Naive thymus-derived CD4-positive, alpha-beta T cell (primary cell): ENCODE measurements at regions of chr7 and their contacts with region 1.

Region 1: GRCh38 chr7:157502701-157503111 is 165.9 kb downstream of the DNAJB6 start:
- DNase-seq: peak; percentile 33 to 94 (median 92)
- ATAC-seq: peak; percentile 98
- H3K4me3 ChIP-seq: peak overlapping the region; percentile 26
- H3K4me3 Mint-ChIP-seq: peak overlapping the region; percentile 77 to 93 (median 87)
- H3K27ac ChIP-seq: peak overlapping the region; percentile 68
- H3K27ac Mint-ChIP-seq: peak overlapping the region; percentile 86 to 100 (median 96)
- H3K4me1 ChIP-seq: peaks cover 20 to 22% of the 10 kb centered on the region in 2 donors
- H3K4me1 Mint-ChIP-seq: peaks cover 20 to 37% (median 34%) of the 10 kb centered on the region in 7 donors
- H3K27me3 ChIP-seq: no peaks in the 10 kb centered on the region
- H3K27me3 Mint-ChIP-seq: peaks cover 0 to 22% (median 7%) of the 10 kb centered on the region in 5 donors

Region 2: DNA sequence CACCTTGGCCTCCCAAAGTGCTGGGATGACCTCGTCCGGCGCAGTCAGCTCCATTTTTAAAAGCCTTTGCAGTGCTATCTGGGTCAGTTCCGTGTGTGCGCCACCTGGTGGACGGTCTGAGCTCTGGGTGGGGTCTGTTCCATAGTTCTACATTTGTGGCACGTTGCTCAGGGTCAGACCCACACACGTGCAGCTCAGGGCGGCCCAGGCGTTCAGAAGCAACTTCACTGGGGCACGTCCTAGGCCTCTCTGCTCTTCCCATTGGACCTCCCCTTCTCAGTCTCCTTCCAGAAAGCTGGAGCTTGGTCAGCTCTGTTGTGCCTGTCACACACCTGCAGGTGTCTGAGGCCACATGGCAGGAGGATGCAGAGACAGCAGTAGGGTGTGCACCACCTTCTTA is 28.0 kb before region 1 on chr7:
- CTCF ChIA-PET with region 1: interaction called, 4 read pairs
- POLR2A ChIA-PET with region 1: interaction called, 6 read pairs
- intact Hi-C with region 1: loop called (anchors 1 kb)
- DNase-seq: no peak
- ATAC-seq: no peak
- H3K4me3 ChIP-seq: no peak overlapping the region
- H3K4me3 Mint-ChIP-seq: peak overlapping the region in 5 of 10 donors; percentile 17 to 44 (median 36)
- H3K27ac ChIP-seq: no peak overlapping the region
- H3K27ac Mint-ChIP-seq: peak overlapping the region in 8 of 9 donors; percentile 3 to 97 (median 76)
- H3K4me1 ChIP-seq: peaks cover 21 to 44% of the 10 kb centered on the region in 2 donors
- H3K4me1 Mint-ChIP-seq: peaks cover 41 to 85% (median 63%) of the 10 kb centered on the region in 7 donors
- H3K27me3 ChIP-seq: no peaks in the 10 kb centered on the region
- H3K27me3 Mint-ChIP-seq: no peaks in the 10 kb centered on the region

Region 3: GRCh38 chr7:157490457-157490912 is 12.2 kb before region 1 on chr7:
- CTCF ChIA-PET with region 1: no interaction called
- POLR2A ChIA-PET with region 1: interaction called, 5 read pairs
- intact Hi-C with region 1: loop called (anchors 1 kb)
- DNase-seq: peak in 8 of 9 donors; percentile 48 to 83 (median 79)
- ATAC-seq: peak; percentile 96
- H3K4me3 ChIP-seq: no peak overlapping the region
- H3K4me3 Mint-ChIP-seq: peak overlapping the region; percentile 23 to 76 (median 51)
- H3K27ac ChIP-seq: no peak overlapping the region
- H3K27ac Mint-ChIP-seq: peak overlapping the region; percentile 12 to 90 (median 63)
- H3K4me1 ChIP-seq: peaks cover 18 to 21% of the 10 kb centered on the region in 2 donors
- H3K4me1 Mint-ChIP-seq: peaks cover 20 to 55% (median 41%) of the 10 kb centered on the region in 7 donors
- H3K27me3 ChIP-seq: no peaks in the 10 kb centered on the region
- H3K27me3 Mint-ChIP-seq: peaks cover 0 to 33% (median 10%) of the 10 kb centered on the region in 5 donors

Region 4: DNA sequence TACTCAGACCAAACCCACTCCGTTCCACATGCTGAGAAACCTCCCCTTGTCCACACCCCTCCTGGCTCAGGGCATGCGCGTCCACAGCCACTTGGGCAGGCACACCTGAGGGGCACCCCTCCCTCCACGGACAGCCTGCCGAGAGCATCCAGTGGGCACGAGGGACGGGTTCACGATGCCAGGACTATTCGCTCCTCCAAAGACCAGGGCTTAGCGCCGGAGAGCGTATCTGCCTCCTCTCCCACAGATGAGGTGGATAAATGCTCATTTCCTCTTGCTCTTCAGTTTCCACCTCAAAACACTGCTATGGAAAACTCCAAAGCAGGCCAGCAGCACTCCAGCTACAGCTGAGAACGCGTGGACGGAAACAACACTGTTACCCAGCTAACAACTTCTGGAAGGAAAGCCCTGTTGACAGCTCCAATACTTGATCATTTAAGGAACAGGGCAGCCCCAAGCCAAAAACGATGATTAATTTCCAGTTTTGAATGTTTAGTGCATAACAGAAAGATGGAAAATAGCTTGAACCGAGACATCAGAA is 38.7 kb after region 1 on chr7:
- CTCF ChIA-PET with region 1: no interaction called
- POLR2A ChIA-PET with region 1: no interaction called
- intact Hi-C with region 1: no loop called
- DNase-seq: no peak
- ATAC-seq: no peak
- H3K4me3 ChIP-seq: no peak overlapping the region
- H3K4me3 Mint-ChIP-seq: no peak overlapping the region
- H3K27ac ChIP-seq: no peak overlapping the region
- H3K27ac Mint-ChIP-seq: no peak overlapping the region
- H3K4me1 ChIP-seq: no peaks in the 10 kb centered on the region
- H3K4me1 Mint-ChIP-seq: peaks cover 0 to 16% (median 5%) of the 10 kb centered on the region in 7 donors
- H3K27me3 ChIP-seq: no peaks in the 10 kb centered on the region
- H3K27me3 Mint-ChIP-seq: peaks cover 0 to 3% (median 0%) of the 10 kb centered on the region in 5 donors

Region 5: GRCh38 chr7:157568770-157569584 is 66.3 kb after region 1 on chr7:
- CTCF ChIA-PET with region 1: no interaction called
- POLR2A ChIA-PET with region 1: no interaction called
- intact Hi-C with region 1: loop called in 1 of 2 experiments (anchors 2 kb)
- DNase-seq: peak; percentile 36 to 73 (median 64)
- ATAC-seq: peak; percentile 84
- H3K4me3 ChIP-seq: peak overlapping the region; percentile 54
- H3K4me3 Mint-ChIP-seq: peak overlapping the region; percentile 87 to 98 (median 92)
- H3K27ac ChIP-seq: no peak overlapping the region
- H3K27ac Mint-ChIP-seq: peak overlapping the region; percentile 63 to 95 (median 82)
- H3K4me1 ChIP-seq: peaks cover 11 to 15% of the 10 kb centered on the region in 2 donors
- H3K4me1 Mint-ChIP-seq: peaks cover 12 to 33% (median 24%) of the 10 kb centered on the region in 7 donors
- H3K27me3 ChIP-seq: no peaks in the 10 kb centered on the region
- H3K27me3 Mint-ChIP-seq: peaks cover 0 to 6% (median 0%) of the 10 kb centered on the region in 5 donors

Region 6: DNA sequence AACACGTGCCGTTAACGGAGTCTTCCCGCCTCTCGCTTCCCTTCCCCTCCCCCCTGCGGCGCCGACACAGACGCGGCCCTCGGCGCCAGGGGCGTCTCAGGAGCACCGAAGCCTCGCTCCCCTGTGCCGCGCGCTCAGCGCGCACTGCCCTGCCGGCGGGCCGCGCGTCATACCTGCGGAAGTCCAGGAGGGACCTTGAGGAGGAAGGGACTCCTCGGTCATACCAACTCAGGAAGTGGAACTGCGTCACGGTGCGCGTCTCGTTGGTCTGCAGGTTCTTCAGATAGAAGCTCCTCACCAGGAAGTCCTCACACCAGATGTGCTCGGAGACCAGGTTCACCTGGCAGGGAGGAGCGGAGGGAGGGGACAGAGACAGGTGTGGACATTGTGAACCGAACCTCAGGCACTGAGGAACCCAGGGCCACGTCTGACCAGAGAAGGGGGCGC is 73.8 kb after region 1 on chr7:
- CTCF ChIA-PET with region 1: interaction called, 4 read pairs
- POLR2A ChIA-PET with region 1: interaction called, 3 read pairs
- intact Hi-C with region 1: loop called in 1 of 2 experiments (anchors 5 kb)
- DNase-seq: peak; percentile 29 to 76 (median 71)
- ATAC-seq: peak; percentile 87
- H3K4me3 ChIP-seq: peak overlapping the region; percentile 52
- H3K4me3 Mint-ChIP-seq: peak overlapping the region; percentile 73 to 88 (median 80)
- H3K27ac ChIP-seq: peak overlapping the region; percentile 69
- H3K27ac Mint-ChIP-seq: peak overlapping the region; percentile 86 to 98 (median 93)
- H3K4me1 ChIP-seq: peaks cover 5 to 12% of the 10 kb centered on the region in 2 donors
- H3K4me1 Mint-ChIP-seq: peaks cover 0 to 27% (median 19%) of the 10 kb centered on the region in 7 donors
- H3K27me3 ChIP-seq: no peaks in the 10 kb centered on the region
- H3K27me3 Mint-ChIP-seq: peaks cover 0 to 7% (median 0%) of the 10 kb centered on the region in 5 donors

Region 7: DNA sequence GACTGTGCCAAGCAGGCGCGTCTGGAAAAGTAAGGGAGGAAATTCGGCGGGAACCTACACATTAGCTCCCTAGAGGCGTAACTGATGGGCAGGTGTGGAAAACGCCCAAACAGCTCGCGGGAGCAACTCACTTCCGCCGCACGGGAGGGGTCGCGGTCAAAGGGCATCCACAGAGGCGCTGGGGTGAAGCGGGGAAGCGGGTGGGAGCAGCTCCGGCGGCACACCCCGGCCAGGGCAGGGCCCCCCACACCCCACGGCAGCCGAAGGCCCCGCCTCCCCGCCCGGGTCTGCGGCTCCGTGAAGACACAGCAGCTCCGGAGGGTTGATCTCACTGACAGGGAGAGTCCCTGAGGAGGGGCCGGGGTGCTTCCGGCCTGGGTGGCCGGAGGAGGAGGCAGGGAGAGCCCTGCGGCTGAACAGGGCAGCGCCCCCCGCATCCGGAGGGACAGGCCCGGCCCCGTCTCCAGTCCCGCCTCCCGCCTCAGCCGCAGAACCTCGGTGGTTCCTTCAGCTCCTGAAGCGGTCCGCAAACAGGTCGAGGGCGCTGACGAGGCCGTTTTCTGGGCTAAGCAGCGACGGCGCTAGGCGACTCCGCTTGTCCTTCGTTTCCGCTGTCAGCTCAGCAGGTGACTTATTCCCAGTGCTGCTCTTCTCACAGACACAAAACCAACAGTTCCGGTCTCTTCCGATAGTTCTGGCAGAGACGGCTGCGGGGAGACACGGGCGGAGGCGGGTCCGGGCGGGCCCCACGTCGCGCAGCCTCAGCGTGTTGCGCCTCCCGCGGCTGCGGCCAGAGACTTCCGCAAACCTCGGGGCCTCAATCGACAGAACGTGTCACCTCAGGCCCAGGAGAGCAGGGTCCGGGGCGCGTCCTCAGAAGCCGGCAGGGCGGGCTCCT is 110.2 kb after region 1 on chr7:
- CTCF ChIA-PET with region 1: no interaction called
- POLR2A ChIA-PET with region 1: interaction called, 3 read pairs
- intact Hi-C with region 1: loop called (anchors 2 kb)
- DNase-seq: peak; percentile 50 to 86 (median 79)
- ATAC-seq: peak; percentile 88
- H3K4me3 ChIP-seq: peak overlapping the region; percentile 79
- H3K4me3 Mint-ChIP-seq: peak overlapping the region; percentile 76 to 93 (median 86)
- H3K27ac ChIP-seq: peak overlapping the region; percentile 63
- H3K27ac Mint-ChIP-seq: peak overlapping the region; percentile 80 to 97 (median 88)
- H3K4me1 ChIP-seq: peaks cover 0 to 8% of the 10 kb centered on the region in 2 donors
- H3K4me1 Mint-ChIP-seq: peaks cover 8 to 37% (median 23%) of the 10 kb centered on the region in 7 donors
- H3K27me3 ChIP-seq: no peaks in the 10 kb centered on the region
- H3K27me3 Mint-ChIP-seq: peaks cover 0 to 4% (median 0%) of the 10 kb centered on the region in 5 donors

Region 8: DNA sequence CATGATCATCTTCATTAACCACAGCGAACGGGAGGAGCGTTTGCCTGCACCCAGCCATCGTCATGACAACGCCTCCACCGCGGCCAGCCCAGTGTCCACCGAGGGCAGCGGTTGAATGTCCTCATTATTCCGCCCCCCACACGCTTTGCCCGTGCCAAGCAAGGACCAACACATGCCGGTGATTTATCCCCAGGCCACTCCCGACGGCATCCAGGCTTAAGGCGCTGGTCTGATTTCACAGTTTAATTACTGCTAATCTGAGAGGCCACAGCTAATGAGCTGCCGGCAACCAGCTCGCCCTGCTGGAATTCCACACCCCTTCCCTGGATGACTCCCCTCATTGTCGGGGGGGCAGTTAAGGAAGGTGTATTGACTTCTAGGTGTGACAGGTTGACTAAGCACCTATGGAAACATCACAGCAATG is 266.4 kb after region 1 on chr7:
- CTCF ChIA-PET with region 1: no interaction called
- POLR2A ChIA-PET with region 1: no interaction called
- intact Hi-C with region 1: no loop called
- DNase-seq: no peak
- ATAC-seq: no peak
- H3K4me3 ChIP-seq: no peak overlapping the region
- H3K4me3 Mint-ChIP-seq: no peak overlapping the region
- H3K27ac ChIP-seq: no peak overlapping the region
- H3K27ac Mint-ChIP-seq: no peak overlapping the region
- H3K4me1 ChIP-seq: no peaks in the 10 kb centered on the region
- H3K4me1 Mint-ChIP-seq: peaks cover 0 to 10% (median 0%) of the 10 kb centered on the region in 7 donors
- H3K27me3 ChIP-seq: no peaks in the 10 kb centered on the region
- H3K27me3 Mint-ChIP-seq: peaks cover 0 to 17% (median 7%) of the 10 kb centered on the region in 5 donors

Region 9: DNA sequence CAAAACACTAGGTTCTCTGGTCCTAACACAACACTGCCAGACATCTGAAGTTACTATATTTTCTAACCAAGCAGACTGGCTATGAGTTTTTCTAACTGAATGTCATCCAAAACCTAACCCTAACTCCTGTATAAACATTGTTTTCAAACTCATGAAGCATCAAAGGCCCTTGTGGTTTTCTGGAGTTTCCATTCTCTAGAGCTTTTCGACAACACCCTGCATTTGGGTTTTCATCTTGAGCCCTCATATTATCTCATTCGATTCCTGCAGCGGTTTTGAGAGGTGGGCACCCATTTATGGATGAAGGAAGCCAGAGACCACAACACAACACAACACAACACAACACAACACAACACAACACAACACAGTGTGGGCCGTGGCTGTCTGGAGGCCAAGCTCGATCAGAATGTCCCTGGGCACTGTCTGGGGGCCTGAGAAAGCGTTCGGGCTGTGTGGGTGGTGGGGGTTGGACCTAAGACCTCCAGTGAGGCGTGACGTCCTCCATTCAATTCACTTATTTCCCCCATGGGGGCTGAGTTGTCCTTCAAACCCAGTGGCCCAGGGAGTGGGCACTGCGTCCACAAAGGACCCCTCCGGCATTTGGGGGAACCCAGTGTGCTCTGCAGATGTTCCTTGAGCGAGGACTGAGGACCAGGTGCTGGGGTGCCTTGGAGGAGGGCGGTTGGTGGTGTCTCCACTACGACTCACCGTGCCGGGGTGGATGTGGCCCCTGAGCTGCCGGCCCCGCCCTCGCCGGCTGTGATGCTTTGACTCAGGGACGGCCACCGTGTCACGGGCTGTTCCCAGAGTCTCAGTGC is 324.5 kb after region 1 on chr7:
- CTCF ChIA-PET with region 1: no interaction called
- POLR2A ChIA-PET with region 1: no interaction called
- intact Hi-C with region 1: loop called in 1 of 2 experiments (anchors 5 kb)
- DNase-seq: peak in 7 of 9 donors; percentile 53 to 79 (median 67)
- ATAC-seq: peak; percentile 74
- H3K4me3 ChIP-seq: peak overlapping the region; percentile 37
- H3K4me3 Mint-ChIP-seq: peak overlapping the region; percentile 45 to 83 (median 78)
- H3K27ac ChIP-seq: peak overlapping the region; percentile 40
- H3K27ac Mint-ChIP-seq: peak overlapping the region; percentile 66 to 96 (median 89)
- H3K4me1 ChIP-seq: peaks cover 0 to 47% of the 10 kb centered on the region in 2 donors
- H3K4me1 Mint-ChIP-seq: peaks cover 9 to 58% (median 45%) of the 10 kb centered on the region in 7 donors
- H3K27me3 ChIP-seq: no peaks in the 10 kb centered on the region
- H3K27me3 Mint-ChIP-seq: no peaks in the 10 kb centered on the region

Region 10: DNA sequence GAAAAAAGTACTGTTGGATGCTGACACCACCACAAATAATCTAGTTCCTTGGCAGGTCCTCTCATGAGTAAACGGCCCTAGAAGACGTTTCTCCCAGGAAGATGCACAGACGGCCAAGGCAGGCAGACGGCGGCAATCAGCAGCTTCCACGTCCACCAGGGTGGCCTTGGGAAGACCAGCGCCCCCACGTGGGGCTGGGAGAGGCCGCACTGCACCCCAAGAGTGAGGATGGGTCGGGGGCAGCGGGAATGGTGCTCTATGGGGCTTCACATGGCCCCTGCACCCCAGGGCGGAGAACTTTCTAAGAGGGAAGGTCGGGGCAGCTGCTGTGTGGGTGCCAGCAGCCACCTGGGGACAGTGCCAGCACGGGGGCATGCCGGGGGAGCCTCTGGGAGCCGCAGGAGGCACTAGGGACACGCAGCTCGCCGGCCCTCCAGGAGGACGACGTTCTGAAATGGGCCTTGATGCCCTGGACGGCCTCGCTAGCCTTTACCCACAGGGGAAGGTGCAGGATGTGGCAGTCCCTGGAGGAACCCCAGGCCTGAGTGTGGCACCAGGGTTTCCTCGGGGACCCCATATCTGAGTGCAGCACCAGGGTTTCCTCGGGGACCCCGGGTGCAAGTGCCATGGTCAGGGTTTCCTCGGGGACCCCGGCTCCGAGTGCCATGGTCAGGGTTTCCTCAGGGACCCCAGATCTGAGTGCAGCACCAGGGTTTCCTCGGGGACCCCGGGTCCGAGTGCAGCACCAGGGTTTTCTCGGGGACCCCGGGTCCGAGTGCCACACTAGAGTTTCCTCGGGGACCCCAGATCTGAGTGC is 374.0 kb after region 1 on chr7:
- CTCF ChIA-PET with region 1: no interaction called
- POLR2A ChIA-PET with region 1: no interaction called
- intact Hi-C with region 1: no loop called
- DNase-seq: no peak
- ATAC-seq: no peak
- H3K4me3 ChIP-seq: no peak overlapping the region
- H3K4me3 Mint-ChIP-seq: no peak overlapping the region
- H3K27ac ChIP-seq: no peak overlapping the region
- H3K27ac Mint-ChIP-seq: peak overlapping the region in 2 of 9 donors; percentile 47 to 68
- H3K4me1 ChIP-seq: peaks cover 0 to 34% of the 10 kb centered on the region in 2 donors
- H3K4me1 Mint-ChIP-seq: peaks cover 17 to 38% (median 34%) of the 10 kb centered on the region in 7 donors
- H3K27me3 ChIP-seq: no peaks in the 10 kb centered on the region
- H3K27me3 Mint-ChIP-seq: peaks cover 0 to 3% (median 0%) of the 10 kb centered on the region in 5 donors